H1 (cell line): ENCODE measurements at regions of chr15 and their contacts with region 1.

Region 1: DNA sequence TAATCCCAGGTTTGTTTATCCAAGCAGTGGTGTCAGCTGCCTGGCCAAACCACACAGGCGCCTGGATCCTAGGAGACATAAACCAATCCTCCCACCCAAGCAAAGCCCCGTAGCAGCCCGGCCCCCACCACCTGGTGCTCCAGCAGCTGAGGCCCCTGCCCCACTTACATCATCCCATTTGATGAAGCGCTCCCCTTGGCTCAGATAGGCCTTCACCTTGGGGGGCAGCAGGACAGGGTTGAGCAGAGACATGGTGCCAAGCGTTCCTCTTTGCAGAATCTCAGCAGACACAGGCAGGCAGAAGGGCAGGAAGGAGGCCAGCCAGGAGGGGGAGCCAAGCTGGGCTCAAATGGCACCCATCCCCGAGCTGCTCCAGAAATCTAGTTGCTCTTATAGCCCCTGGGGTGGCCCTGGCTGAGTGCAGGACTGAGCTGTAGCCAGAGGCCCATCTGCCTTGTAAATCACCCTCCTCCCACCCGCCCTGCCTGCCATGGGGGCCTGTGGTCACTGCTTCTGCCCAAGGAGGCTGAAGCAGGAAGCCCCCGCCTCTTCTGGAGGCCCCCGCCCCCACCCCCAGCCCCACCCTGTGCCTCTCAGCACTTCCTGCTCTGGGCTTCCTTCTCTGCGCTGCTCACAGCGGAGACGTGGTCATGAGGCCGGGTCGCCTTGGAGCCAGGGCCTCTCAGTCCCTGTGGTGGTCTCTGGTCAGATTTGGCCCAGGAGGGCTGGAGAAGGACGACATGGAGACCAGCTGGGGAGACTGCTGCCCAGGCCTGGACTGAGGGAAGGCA is at the start of gene PLCB2:
- DNase-seq: no peak
- H3K4me3 ChIP-seq: 0 out of 8 replicates have a peak within 1 kb of the TSS, but pooled peaks of 1 of the 4 experiments have one; percentile 19
- H3K27ac ChIP-seq: no peak within 1 kb of the TSS
- H3K4me1 ChIP-seq: peaks cover 0 to 29% (median 21%) of the 10 kb centered on the region in 4 experiments; a peak in 6 of 7 replicates
- H3K27me3 ChIP-seq: peaks cover 0 to 6% (median 0%) of the 10 kb centered on the region in 4 experiments; a peak in 3 of 7 replicates
- CTCF ChIP-seq: peak; percentile 30 to 60 (median 52); a peak in 3 of 4 replicates
- EP300 ChIP-seq: no peak
- POLR2A ChIP-seq: no peak
- RAD21 ChIP-seq: peak in 1 of 2 experiments; percentile 24; a peak in 1 of 4 replicates
- total RNA-seq, gene PLCB2: 8.4 and 9.4 TPM in 2 replicates

Region 2: DNA sequence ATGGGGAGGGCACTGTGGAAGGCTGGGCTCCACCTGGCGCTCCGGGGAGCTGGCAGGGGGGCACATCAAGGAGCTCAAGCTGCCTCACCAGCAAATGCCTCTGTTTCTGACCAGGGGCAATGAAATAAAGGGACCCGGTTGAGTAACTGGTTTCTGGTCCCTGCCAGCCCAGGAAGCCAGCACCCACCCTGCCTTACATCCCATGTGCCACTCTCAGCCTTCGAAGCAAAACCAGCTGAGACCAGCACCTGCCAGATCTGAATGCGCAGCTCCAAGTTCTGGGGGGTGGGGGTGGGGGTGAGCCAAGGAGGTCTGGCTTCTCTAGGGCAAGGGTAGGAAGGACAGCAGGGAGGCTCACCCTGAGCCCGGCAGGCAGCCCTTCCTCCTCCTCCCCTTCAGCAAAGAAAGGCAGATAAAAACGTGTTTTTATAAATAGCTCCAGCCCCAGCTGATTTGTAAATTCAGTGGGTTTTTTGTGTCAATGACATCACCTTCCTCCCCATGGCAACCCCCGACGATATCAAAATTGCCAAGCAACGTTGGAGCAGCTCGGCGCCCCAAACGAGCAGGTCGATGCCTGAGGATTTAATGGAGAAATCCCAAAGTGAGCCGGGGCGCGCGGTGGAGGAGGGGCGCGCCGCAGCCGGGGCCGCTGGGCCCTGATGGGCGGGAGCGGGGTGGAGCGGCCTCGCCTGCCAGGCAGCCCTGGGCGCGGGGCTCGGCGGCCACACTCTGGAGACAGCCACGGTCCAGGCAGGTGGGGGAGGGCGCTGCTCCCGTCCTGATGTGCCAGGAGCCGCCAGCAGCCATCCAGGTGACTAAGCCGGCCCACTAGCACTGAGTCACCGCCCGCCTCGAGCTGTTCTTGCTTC is 68.8 kb before region 1 on chr15 and contains the start of gene PAK6:
- CTCF ChIA-PET with region 1: interaction called, 16 read pairs
- POLR2A ChIA-PET with region 1: interaction called, 4 read pairs
- DNase-seq: peak; percentile 60 to 90
- H3K4me3 ChIP-seq: peak within 1 kb of the TSS; percentile 14 to 54 (median 30); a peak in 7 of 8 replicates
- H3K27ac ChIP-seq: no peak within 1 kb of the TSS
- H3K4me1 ChIP-seq: peaks cover 9 to 18% (median 14%) of the 10 kb centered on the region in 4 experiments
- H3K27me3 ChIP-seq: peaks cover 0 to 6% (median 2%) of the 10 kb centered on the region in 4 experiments; a peak in 2 of 7 replicates
- CTCF ChIP-seq: peak in 1 of 3 experiments; percentile 4; a peak in 1 of 4 replicates
- EP300 ChIP-seq: no peak
- POLR2A ChIP-seq: peak in 1 of 2 experiments; percentile 64; a peak in 2 of 3 replicates
- RAD21 ChIP-seq: no peak
- total RNA-seq, gene PAK6: 9.0 and 9.4 TPM in 2 replicates

Region 3: GRCh38 chr15:40266828-40267304 is 40.8 kb before region 1 on chr15:
- CTCF ChIA-PET with region 1: interaction called, 531 read pairs
- POLR2A ChIA-PET with region 1: no interaction called
- DNase-seq: no peak
- H3K4me3 ChIP-seq: no peak overlapping the region
- H3K27ac ChIP-seq: no peak overlapping the region
- H3K4me1 ChIP-seq: peaks cover 0 to 4% (median under 1%) of the 10 kb centered on the region in 4 experiments; a peak in 4 of 7 replicates
- H3K27me3 ChIP-seq: no peaks in the 10 kb centered on the region
- CTCF ChIP-seq: no peak
- EP300 ChIP-seq: no peak
- POLR2A ChIP-seq: no peak
- RAD21 ChIP-seq: no peak

Region 4: GRCh38 chr15:40290918-40291574 is 16.6 kb before region 1 on chr15:
- CTCF ChIA-PET with region 1: interaction called, 518 read pairs
- POLR2A ChIA-PET with region 1: interaction called, 46 read pairs
- DNase-seq: peak in 1 of 2 experiments; percentile 80
- H3K4me3 ChIP-seq: peak overlapping the region; percentile 12 to 54 (median 18); a peak in 5 of 8 replicates
- H3K27ac ChIP-seq: no peak overlapping the region
- H3K4me1 ChIP-seq: peaks cover 0 to 28% (median 14%) of the 10 kb centered on the region in 4 experiments; a peak in 6 of 7 replicates
- H3K27me3 ChIP-seq: peaks cover 16 to 52% (median 36%) of the 10 kb centered on the region in 4 experiments; a peak in 6 of 7 replicates
- CTCF ChIP-seq: no peak
- EP300 ChIP-seq: no peak
- POLR2A ChIP-seq: no peak
- RAD21 ChIP-seq: no peak

Region 5: GRCh38 chr15:40330368-40330836 is 22.8 kb after region 1 on chr15:
- CTCF ChIA-PET with region 1: interaction called, 584 read pairs
- POLR2A ChIA-PET with region 1: interaction called, 4 read pairs
- DNase-seq: no peak
- H3K4me3 ChIP-seq: no peak overlapping the region
- H3K27ac ChIP-seq: no peak overlapping the region
- H3K4me1 ChIP-seq: peaks cover 24 to 42% (median 32%) of the 10 kb centered on the region in 4 experiments
- H3K27me3 ChIP-seq: peaks cover 0 to 1% (median 0%) of the 10 kb centered on the region in 4 experiments; a peak in 1 of 7 replicates
- CTCF ChIP-seq: no peak
- EP300 ChIP-seq: no peak
- POLR2A ChIP-seq: no peak
- RAD21 ChIP-seq: no peak

Region 6: DNA sequence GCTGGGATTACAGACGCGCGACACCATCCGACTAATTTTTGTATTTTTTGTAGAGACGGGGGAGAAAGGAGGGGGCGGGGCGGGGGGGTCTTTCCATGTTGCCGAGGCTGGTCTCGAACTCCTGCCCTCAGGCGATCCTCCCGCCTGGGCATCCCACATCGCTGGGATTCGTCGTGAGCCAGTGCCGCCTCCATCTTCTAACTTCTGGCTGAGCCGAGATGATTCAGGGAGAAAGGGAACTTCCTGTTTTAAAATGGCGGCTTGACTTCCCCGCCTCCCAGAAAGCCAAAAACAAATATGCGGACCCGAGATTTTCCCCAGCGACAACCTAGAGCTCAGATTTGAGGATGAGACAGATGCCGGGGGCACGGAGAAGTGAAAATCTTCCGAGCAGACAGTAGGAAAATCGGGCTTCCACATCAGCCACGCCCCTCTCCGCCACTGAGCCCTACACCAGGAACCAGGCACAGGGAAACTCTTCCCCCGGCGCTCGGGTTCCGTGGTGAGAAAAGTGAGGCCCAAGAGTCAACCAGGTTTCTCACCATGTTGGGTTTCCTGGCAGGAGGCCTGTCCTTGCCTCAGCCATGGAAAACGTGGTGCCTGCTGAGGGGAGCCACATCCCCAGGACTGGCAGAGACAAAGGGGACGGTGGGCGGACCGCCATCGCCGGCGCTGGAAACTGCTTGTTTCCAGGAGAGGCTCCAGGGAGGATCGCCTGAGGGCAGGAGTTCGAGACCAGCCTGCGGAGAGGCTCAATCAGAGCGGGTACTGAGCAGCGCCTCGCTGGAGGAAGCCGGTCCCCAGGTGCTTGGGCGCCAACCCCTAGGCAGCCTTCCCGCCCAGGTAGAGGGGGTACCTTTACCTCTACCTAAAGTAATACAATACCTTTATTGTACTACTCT is 181.9 kb after region 1 on chr15:
- CTCF ChIA-PET with region 1: no interaction called
- POLR2A ChIA-PET with region 1: no interaction called
- DNase-seq: no peak
- H3K4me3 ChIP-seq: no peak overlapping the region
- H3K27ac ChIP-seq: no peak overlapping the region
- H3K4me1 ChIP-seq: no peaks in the 10 kb centered on the region; a peak in 1 of 7 replicates
- H3K27me3 ChIP-seq: no peaks in the 10 kb centered on the region
- CTCF ChIP-seq: no peak
- EP300 ChIP-seq: no peak
- POLR2A ChIP-seq: no peak
- RAD21 ChIP-seq: no peak